ENCODE measurements at regions of chr19 and their contacts with region 1.

Region 1: GRCh38 chr19:3984908-3985642 is at the start of gene EEF2:
- DNase-seq: peak; percentile 48
- ATAC-seq: peak; percentile 32
- H3K4me3 ChIP-seq: peak within 1 kb of the TSS; percentile 97
- H3K27ac ChIP-seq: peak within 1 kb of the TSS; percentile 79
- H3K4me1 ChIP-seq: peaks cover 25% of the 10 kb centered on the region
- H3K27me3 ChIP-seq: no peaks in the 10 kb centered on the region
- CTCF ChIP-seq: no peak
- EP300 ChIP-seq: 0 out of 4 replicates have a peak, but pooled peaks of 1 of the 2 experiments have one; percentile 22
- POLR2A ChIP-seq: peak; percentile 100
- RAD21 ChIP-seq: no peak
- polyA plus RNA-seq, gene EEF2: 513 to 937 TPM

Region 2: GRCh38 chr19:4007021-4007835 is 22.2 kb after region 1 on chr19 and contains the start of gene PIAS4:
- CTCF ChIA-PET with region 1: interaction called, 26 read pairs
- POLR2A ChIA-PET with region 1: interaction called, 20 read pairs
- RAD21 ChIA-PET with region 1: interaction called, 8 read pairs
- SMC1A ChIA-PET with region 1: interaction called, 11 read pairs
- in situ Hi-C with region 1: no loop called
- intact Hi-C with region 1: no loop called
- DNase-seq: peak; percentile 69
- ATAC-seq: peak; percentile 98
- H3K4me3 ChIP-seq: peak within 1 kb of the TSS; percentile 88
- H3K27ac ChIP-seq: peak within 1 kb of the TSS; percentile 62
- H3K4me1 ChIP-seq: peaks cover 7% of the 10 kb centered on the region; the same call in 1 of the 2 replicates
- H3K27me3 ChIP-seq: no peaks in the 10 kb centered on the region
- CTCF ChIP-seq: 0 out of 6 replicates have a peak, but pooled peaks of 1 of the 3 experiments have one; percentile 3
- EP300 ChIP-seq: 0 out of 4 replicates have a peak, but pooled peaks of 1 of the 2 experiments have one; percentile 3
- POLR2A ChIP-seq: peak; percentile 92
- RAD21 ChIP-seq: no peak
- polyA plus RNA-seq, gene PIAS4: 0.13 to 0.40 TPM

Region 3: GRCh38 chr19:4023600-4024398 is 38.7 kb after region 1 on chr19:
- CTCF ChIA-PET with region 1: no interaction called
- POLR2A ChIA-PET with region 1: no interaction called
- RAD21 ChIA-PET with region 1: no interaction called
- SMC1A ChIA-PET with region 1: no interaction called
- in situ Hi-C with region 1: no loop called
- intact Hi-C with region 1: no loop called
- DNase-seq: no peak
- ATAC-seq: no peak
- H3K4me3 ChIP-seq: no peak overlapping the region
- H3K27ac ChIP-seq: no peak overlapping the region
- H3K4me1 ChIP-seq: no peaks in the 10 kb centered on the region
- H3K27me3 ChIP-seq: no peaks in the 10 kb centered on the region
- CTCF ChIP-seq: no peak
- EP300 ChIP-seq: no peak
- POLR2A ChIP-seq: no peak
- RAD21 ChIP-seq: no peak

Region 4: GRCh38 chr19:4108767-4109625 is 123.9 kb after region 1 on chr19:
- CTCF ChIA-PET with region 1: interaction called, 16 read pairs
- POLR2A ChIA-PET with region 1: interaction called, 8 read pairs
- RAD21 ChIA-PET with region 1: interaction called, 10 read pairs
- SMC1A ChIA-PET with region 1: interaction called, 7 read pairs
- in situ Hi-C with region 1: no loop called
- intact Hi-C with region 1: loop called (anchors 1 kb)
- DNase-seq: peak; percentile 79
- ATAC-seq: peak; percentile 94
- H3K4me3 ChIP-seq: 0 out of 2 replicates have a peak overlapping the region, but pooled peaks have one; percentile 26
- H3K27ac ChIP-seq: peak overlapping the region; percentile 95
- H3K4me1 ChIP-seq: peaks cover 32% of the 10 kb centered on the region
- H3K27me3 ChIP-seq: no peaks in the 10 kb centered on the region
- CTCF ChIP-seq: no peak
- EP300 ChIP-seq: peak; percentile 63 to 65; a peak in 2 of 4 replicates
- POLR2A ChIP-seq: peak; percentile 73; the same call in 1 of the 2 replicates
- RAD21 ChIP-seq: peak; percentile 8; the same call in 1 of the 2 replicates

Region 5: DNA sequence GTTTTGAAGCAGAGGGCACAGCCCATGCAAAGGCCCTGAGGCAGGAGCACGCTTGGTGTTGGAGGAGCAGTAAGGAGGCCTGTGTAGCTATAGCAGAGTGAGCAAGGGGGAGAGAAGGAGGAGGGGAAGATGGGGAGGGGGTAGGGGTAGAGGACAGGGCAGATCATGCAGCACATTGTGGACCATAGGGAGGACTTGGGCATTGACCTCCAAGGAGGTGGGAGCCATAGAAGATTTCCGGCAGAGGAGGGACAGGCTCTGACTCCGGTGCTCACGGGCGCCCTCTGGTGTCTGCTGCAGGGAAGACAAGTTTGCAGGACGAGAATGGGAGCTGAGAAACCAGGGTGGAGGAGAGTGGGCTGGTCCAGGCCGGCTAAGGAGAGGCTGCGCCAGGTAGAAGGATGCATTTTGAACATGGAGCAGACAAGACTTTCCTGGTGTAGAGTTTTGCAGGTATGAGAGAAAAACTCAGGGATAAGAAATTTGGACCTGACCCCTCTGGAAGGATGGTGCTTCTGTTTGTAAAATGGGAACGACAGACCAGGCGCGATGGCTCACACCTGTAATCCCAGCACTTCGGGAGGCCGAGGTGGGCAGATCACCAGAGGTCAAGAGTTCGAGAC is 154.7 kb after region 1 on chr19:
- CTCF ChIA-PET with region 1: interaction called, 66 read pairs
- POLR2A ChIA-PET with region 1: interaction called, 6 read pairs
- RAD21 ChIA-PET with region 1: interaction called, 15 read pairs
- SMC1A ChIA-PET with region 1: interaction called, 26 read pairs
- in situ Hi-C with region 1: no loop called
- intact Hi-C with region 1: loop called (anchors 1 kb)
- DNase-seq: peak; percentile 48
- ATAC-seq: peak; percentile 98
- H3K4me3 ChIP-seq: no peak overlapping the region
- H3K27ac ChIP-seq: no peak overlapping the region
- H3K4me1 ChIP-seq: peaks cover 4% of the 10 kb centered on the region; the same call in 1 of the 2 replicates
- H3K27me3 ChIP-seq: no peaks in the 10 kb centered on the region
- CTCF ChIP-seq: peak; percentile 85 to 97 (median 95)
- EP300 ChIP-seq: no peak
- POLR2A ChIP-seq: no peak
- RAD21 ChIP-seq: peak; percentile 61

Region 6: DNA sequence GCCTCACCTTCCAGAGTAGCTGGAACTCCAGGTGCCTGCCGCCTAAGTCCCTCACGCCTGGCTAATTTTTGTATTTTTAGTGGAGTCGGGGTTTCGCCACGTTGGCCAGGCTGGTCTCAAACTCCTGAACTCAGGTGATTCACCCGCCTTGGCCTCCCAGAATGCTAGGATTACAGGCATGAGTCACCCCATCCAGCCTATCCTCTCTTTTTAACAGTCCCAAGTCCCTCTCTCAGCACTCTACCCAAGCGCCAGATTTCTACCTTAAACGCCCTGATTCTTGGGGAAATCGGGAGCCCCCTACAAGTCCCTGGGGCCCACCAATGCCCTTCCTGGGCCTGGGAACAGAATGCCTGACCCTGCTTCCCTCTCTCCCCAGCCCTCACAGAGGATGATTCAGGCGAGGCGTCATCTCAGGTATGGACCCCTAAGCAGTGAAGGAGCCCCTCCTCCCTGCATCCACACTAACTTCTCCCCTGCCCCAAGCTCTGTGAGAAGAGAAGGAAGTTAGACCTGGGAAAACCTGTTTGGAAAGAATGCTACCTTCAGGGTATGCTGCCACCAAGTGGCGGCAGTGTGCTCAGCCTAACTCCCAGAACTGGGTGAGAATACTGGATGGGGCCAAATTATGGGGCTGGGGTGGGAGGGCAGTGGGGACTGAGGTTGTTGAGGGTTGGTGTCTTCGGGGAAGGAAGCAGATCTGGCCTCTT is 223.5 kb after region 1 on chr19:
- CTCF ChIA-PET with region 1: interaction called, 17 read pairs
- POLR2A ChIA-PET with region 1: no interaction called
- RAD21 ChIA-PET with region 1: interaction called, 9 read pairs
- SMC1A ChIA-PET with region 1: interaction called, 7 read pairs
- in situ Hi-C with region 1: no loop called
- intact Hi-C with region 1: loop called (anchors 5 kb)
- DNase-seq: no peak
- ATAC-seq: peak; percentile 68
- H3K4me3 ChIP-seq: no peak overlapping the region
- H3K27ac ChIP-seq: no peak overlapping the region
- H3K4me1 ChIP-seq: no peaks in the 10 kb centered on the region
- H3K27me3 ChIP-seq: no peaks in the 10 kb centered on the region
- CTCF ChIP-seq: peak; percentile 61 to 78 (median 62)
- EP300 ChIP-seq: no peak
- POLR2A ChIP-seq: no peak
- RAD21 ChIP-seq: peak; percentile 14; the same call in 1 of the 2 replicates

Measured in GM12878 (cell line).